Activated B cell treated with CpG ODN at 0.5 μM for 24 hours (primary cell): ENCODE measurements at regions of chr16 and their contacts with region 1.

Region 1: DNA sequence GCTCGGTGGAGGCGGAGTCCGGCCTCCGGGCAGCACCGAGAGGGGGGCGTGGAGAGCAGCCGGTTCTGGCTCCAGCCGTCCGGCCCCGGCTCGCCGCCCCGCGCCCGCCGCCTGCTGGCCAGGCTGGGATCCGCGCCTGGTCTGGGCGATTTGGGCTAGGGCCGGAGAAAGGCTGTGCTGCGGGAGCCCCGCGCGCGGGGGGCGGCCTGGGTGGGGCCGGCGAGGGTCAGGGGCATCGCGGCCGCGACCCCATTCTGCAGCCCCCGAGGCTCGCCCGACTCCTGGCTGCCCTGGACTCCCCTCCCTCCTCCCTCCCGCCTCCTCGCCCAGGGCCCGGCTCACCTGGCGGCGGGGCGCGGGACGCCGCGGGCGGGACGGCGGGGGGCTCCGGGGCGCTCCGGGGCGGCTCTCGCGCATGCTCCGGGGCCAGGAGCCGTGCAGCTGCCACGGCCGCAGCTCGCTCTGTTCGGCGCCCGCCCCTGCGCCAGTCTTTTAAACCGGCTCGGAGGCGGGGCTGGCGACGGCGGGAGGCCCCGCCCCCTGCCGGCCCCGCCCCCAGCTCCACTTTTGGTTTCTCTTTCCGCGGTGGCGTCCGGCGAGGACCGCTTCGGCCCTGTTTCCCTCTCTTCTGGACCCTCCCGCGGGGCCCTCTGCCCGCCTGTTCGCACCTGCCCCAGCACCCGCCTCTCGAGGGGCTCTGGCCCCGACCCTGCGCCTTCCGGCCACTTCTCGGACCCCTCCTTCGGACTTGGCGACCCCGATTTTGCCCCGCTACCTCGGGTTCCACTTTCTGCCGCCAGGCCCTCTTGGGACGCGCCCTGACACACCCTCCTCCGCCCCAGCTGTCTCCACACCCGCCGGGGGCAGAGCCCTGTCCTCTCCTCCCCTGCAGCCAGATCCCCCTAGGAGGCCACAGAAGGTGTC is at the start of gene SOCS1:
- DNase-seq: peak; percentile 92
- ATAC-seq: peak; percentile 71
- H3K4me3 Mint-ChIP-seq: peak within 1 kb of the TSS; percentile 98
- H3K27ac Mint-ChIP-seq: peak within 1 kb of the TSS; percentile 98
- H3K4me1 Mint-ChIP-seq: peaks cover 60% of the 10 kb centered on the region
- H3K27me3 Mint-ChIP-seq: no peaks in the 10 kb centered on the region
- CTCF ChIP-seq: peak; percentile 46
- total RNA-seq, gene SOCS1: 68.6 and 76.2 TPM in 2 replicates

Region 2: GRCh38 chr16:10971560-10971961 is 284.4 kb before region 1 on chr16:
- CTCF ChIA-PET with region 1: interaction called, 37 read pairs
- POLR2A ChIA-PET with region 1: interaction called, 169 read pairs
- intact Hi-C with region 1: loop called (anchors 1 kb)
- DNase-seq: no peak
- ATAC-seq: peak; percentile 54
- H3K4me3 Mint-ChIP-seq: no peak overlapping the region
- H3K27ac Mint-ChIP-seq: no peak overlapping the region
- H3K4me1 Mint-ChIP-seq: peaks cover 12% of the 10 kb centered on the region
- H3K27me3 Mint-ChIP-seq: no peaks in the 10 kb centered on the region
- CTCF ChIP-seq: peak; percentile 74

Region 3: DNA sequence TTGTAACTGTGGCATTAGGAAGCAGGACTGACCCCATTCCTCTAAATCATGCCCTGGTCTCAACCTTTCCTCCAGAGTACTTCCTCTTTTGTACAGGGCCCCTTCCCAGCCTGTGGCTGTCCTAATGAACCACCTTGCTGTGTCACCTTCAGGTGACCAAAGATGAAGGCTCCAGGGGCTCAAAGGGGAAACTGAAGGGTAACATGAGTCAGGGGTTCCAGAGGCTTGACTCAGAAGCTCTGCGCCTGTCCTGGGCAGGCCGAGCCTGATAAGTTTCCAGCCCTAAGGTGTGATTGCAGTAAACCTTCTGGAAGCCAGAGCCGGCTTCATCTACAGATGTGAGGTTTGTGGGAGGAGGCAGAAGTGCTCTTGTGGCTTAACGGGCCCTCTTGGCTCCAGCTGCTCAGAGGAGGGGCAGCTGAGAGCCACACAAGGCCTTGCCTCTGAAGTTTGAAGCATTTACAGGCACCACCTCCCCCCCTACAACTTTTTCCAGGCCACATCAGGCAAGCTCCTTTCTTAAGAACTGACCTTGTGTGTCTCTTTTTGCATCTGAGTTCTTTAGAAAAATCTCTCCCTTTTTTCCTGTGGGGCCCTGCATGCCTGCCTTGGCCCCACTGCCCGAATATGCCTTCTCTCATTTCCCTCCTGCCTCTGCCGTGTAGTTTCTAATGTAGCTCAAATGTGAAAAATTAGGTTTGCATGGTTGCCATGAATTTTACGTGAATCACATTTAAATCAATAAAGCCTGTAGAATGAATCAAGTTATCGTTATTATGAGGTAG is 161.7 kb before region 1 on chr16:
- CTCF ChIA-PET with region 1: interaction called, 4 read pairs
- POLR2A ChIA-PET with region 1: interaction called, 30 read pairs
- intact Hi-C with region 1: no loop called
- DNase-seq: no peak
- ATAC-seq: peak; percentile 67
- H3K4me3 Mint-ChIP-seq: peak overlapping the region; percentile 68
- H3K27ac Mint-ChIP-seq: peak overlapping the region; percentile 94
- H3K4me1 Mint-ChIP-seq: peaks cover 40% of the 10 kb centered on the region
- H3K27me3 Mint-ChIP-seq: no peaks in the 10 kb centered on the region
- CTCF ChIP-seq: no peak

Region 4: GRCh38 chr16:11201498-11202259 is 54.3 kb before region 1 on chr16:
- CTCF ChIA-PET with region 1: interaction called, 7 read pairs
- POLR2A ChIA-PET with region 1: interaction called, 38 read pairs
- intact Hi-C with region 1: loop called (anchors 1 kb)
- DNase-seq: no peak
- ATAC-seq: no peak
- H3K4me3 Mint-ChIP-seq: no peak overlapping the region
- H3K27ac Mint-ChIP-seq: peak overlapping the region; percentile 26
- H3K4me1 Mint-ChIP-seq: peaks cover 52% of the 10 kb centered on the region
- H3K27me3 Mint-ChIP-seq: peaks cover 7% of the 10 kb centered on the region
- CTCF ChIP-seq: no peak

Region 5: DNA sequence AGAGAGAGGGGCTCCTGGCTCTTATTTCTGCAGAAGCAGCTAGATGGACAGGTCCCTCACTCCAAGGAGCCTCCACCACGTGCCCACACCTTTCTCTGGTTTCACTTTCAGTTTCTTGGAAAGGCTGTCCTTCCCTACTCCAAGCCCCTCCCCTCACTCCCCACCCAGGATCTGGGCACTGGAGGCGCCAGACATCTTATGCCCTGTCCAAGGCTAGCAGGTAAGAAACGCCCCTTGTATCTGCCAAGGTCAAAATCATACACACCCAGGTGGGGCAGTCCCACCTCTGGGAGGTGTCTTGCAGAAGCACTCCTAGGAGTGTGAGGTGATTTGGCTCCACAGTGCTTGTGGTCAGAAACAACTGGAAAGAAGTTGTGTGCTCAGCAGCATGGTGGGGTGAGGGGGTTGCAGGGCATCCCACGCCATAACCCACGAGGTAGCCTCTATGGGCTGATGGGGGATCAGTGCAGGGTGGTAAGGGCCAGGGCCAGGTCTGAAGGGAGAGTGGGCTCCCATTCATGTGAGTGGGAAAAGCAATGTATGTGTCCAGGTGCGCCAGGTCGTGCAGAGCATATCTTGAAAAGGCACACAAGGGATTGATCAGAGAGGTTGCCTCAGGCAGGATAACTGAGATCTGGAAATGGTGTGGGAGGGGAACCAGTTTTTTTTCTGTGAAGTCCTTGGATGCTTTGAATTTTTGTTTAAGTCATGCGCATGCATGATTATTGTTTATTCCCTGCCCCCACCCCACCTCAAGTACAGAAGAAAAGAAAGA is 56.9 kb after region 1 on chr16:
- CTCF ChIA-PET with region 1: interaction called, 4 read pairs
- POLR2A ChIA-PET with region 1: interaction called, 126 read pairs
- intact Hi-C with region 1: loop called (anchors 1 kb)
- DNase-seq: no peak
- ATAC-seq: no peak
- H3K4me3 Mint-ChIP-seq: no peak overlapping the region
- H3K27ac Mint-ChIP-seq: peak overlapping the region; percentile 47
- H3K4me1 Mint-ChIP-seq: peaks cover 74% of the 10 kb centered on the region
- H3K27me3 Mint-ChIP-seq: no peaks in the 10 kb centered on the region
- CTCF ChIP-seq: no peak

Region 6: DNA sequence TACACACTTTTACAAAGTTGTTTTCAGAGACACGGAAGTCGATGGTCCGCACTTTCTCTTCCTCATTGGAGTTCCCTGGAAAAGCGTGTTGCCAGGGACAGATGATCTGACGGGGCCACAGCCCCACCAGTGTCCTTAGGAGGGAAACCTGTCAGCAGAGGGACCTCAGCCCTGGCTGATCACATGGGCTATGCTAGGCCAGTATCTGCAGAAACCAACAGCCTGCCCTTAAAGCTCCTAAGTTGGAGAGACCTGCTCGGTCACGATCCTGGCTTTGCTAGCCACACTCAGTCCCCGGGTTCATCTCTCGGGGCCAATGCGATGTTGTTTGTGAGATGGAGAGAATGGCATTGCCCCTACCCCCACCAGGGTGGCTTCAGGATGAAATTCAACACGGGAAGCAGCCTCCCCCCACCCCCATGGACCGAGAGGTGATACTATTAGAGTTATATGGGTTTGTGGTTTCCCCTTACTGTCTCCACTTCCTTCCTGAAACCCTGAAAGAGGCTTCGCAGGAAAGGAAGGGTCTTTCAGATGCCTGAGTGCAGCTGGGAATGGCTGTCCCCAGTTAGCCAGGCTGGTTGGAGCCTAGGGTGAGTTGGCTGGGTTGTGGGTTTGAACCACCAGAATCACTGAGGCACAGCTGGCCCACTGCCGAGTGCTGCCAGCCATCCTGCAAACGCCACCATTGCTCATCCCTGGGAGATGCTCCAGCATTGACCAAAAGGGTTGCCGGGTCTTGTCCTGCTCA is 105.9 kb after region 1 on chr16:
- CTCF ChIA-PET with region 1: interaction called, 98 read pairs
- POLR2A ChIA-PET with region 1: interaction called, 252 read pairs
- intact Hi-C with region 1: no loop called
- DNase-seq: no peak
- ATAC-seq: peak; percentile 49
- H3K4me3 Mint-ChIP-seq: peak overlapping the region; percentile 67
- H3K27ac Mint-ChIP-seq: peak overlapping the region; percentile 16
- H3K4me1 Mint-ChIP-seq: peaks cover 55% of the 10 kb centered on the region
- H3K27me3 Mint-ChIP-seq: peaks cover 21% of the 10 kb centered on the region
- CTCF ChIP-seq: no peak

Region 7: GRCh38 chr16:11915644-11916523 is 659.9 kb after region 1 on chr16 and contains the start of gene GSPT1:
- CTCF ChIA-PET with region 1: no interaction called
- POLR2A ChIA-PET with region 1: no interaction called
- intact Hi-C with region 1: loop called (anchors 5 kb)
- DNase-seq: peak; percentile 98
- ATAC-seq: peak; percentile 93
- H3K4me3 Mint-ChIP-seq: peak within 1 kb of the TSS; percentile 89
- H3K27ac Mint-ChIP-seq: peak within 1 kb of the TSS; percentile 89
- H3K4me1 Mint-ChIP-seq: peaks cover 31% of the 10 kb centered on the region
- H3K27me3 Mint-ChIP-seq: peaks cover 4% of the 10 kb centered on the region
- CTCF ChIP-seq: no peak
- total RNA-seq, gene GSPT1: 99.9 and 101 TPM in 2 replicates